ENCODE measurements at regions of chr6 and their contacts with region 1.

Region 1: DNA sequence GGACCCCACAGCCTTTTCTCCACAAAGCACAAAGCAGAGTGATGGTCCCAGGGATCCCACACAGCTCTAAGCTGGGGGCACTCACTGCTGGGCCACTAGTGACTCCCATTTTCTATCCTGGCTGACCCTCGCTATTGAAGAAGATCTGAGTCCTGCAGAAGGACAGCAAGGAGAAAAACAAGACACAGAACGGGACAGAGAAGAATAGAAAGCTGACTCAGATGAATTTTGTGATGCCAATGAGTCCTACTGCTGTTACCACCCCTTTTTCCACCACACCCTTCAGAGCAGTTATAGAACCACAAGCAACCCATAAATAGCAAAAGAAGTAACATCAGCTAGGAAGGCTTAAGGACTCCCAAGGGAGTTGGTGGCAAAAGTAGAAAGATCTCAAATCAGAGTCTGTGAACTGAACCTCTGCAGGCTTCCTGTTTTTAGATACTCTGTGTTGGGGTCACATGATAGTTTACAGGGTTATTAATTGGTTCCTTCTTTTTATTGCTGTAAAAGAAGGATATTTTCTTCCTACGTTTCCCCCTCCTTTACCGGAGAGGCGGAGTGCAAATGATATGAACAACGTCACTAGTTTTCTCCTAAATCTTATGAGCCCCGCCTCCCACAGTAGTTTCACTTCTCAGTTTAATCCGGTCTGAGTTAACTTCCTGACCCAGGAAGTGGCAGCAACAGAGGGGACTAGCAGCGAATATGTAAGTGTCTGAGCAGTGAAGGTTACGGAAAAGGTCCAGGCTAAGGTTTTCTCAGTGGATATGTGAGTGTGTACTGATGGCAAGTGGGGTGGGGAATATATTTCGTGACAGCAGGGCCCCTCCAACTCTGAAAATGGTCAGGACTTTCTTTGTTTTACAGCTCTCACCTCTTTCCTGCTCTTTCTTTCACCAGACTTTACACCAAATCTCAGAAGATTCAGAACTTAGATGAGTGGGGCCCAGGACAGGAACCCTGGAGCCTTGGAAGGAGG is at the start of gene TRIM38:
- DNase-seq: peak; percentile 88
- ATAC-seq: peak; percentile 87
- H3K4me3 Mint-ChIP-seq: peak within 1 kb of the TSS; percentile 83
- H3K27ac Mint-ChIP-seq: peak within 1 kb of the TSS; percentile 94
- H3K4me1 Mint-ChIP-seq: peaks cover 73% of the 10 kb centered on the region
- H3K27me3 Mint-ChIP-seq: no peaks in the 10 kb centered on the region
- CTCF ChIP-seq: no peak
- total RNA-seq, gene TRIM38: 8.0 to 8.3 TPM

Region 2: GRCh38 chr6:25173951-25174474 is 788.4 kb before region 1 on chr6:
- CTCF ChIA-PET with region 1: no interaction called
- POLR2A ChIA-PET with region 1: no interaction called
- intact Hi-C with region 1: no loop called
- DNase-seq: no peak
- ATAC-seq: peak; percentile 71
- H3K4me3 Mint-ChIP-seq: no peak overlapping the region
- H3K27ac Mint-ChIP-seq: no peak overlapping the region
- H3K4me1 Mint-ChIP-seq: peaks cover 57% of the 10 kb centered on the region
- H3K27me3 Mint-ChIP-seq: peaks cover 5% of the 10 kb centered on the region
- CTCF ChIP-seq: no peak

Region 3: GRCh38 chr6:25942561-25943147 is 19.8 kb before region 1 on chr6:
- CTCF ChIA-PET with region 1: no interaction called
- POLR2A ChIA-PET with region 1: interaction called, 3 read pairs
- intact Hi-C with region 1: loop called (anchors 1 kb)
- DNase-seq: no peak
- ATAC-seq: no peak
- H3K4me3 Mint-ChIP-seq: no peak overlapping the region
- H3K27ac Mint-ChIP-seq: no peak overlapping the region
- H3K4me1 Mint-ChIP-seq: peaks cover 16% of the 10 kb centered on the region
- H3K27me3 Mint-ChIP-seq: peaks cover 6% of the 10 kb centered on the region
- CTCF ChIP-seq: peak; percentile 67

Region 4: DNA sequence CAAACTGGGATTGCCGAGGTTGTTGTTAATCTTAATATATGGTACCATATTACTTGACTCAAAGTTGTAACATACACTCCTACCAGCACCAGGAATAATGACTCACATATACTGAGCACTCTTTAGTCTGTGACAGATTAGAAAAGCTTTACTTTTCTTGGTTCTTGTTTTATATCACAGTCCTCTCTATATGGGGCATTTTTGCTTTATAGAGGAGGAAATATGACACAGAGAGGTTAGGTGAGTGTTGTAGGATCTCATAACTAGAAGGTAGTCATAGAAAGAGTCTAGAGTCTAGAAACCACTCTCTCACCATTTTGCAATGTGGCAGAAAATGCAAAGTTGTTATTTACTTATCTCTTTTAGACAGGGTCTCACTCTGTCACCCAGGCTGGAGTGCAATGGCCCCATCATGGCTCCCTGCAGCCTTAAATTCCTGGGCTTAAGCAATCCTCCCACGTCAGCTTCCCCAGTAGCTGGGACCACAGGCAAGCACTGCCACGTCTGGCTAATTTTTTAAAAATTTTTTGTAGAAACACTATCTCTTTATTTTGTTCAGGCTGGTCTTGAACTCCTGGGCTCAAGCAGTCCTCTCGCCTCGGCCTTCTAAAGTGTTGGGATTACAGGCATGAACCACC is 13.6 kb after region 1 on chr6:
- CTCF ChIA-PET with region 1: interaction called, 7 read pairs
- POLR2A ChIA-PET with region 1: interaction called, 10 read pairs
- intact Hi-C with region 1: no loop called
- DNase-seq: no peak
- ATAC-seq: peak; percentile 91
- H3K4me3 Mint-ChIP-seq: no peak overlapping the region
- H3K27ac Mint-ChIP-seq: peak overlapping the region; percentile 3
- H3K4me1 Mint-ChIP-seq: peaks cover 35% of the 10 kb centered on the region
- H3K27me3 Mint-ChIP-seq: no peaks in the 10 kb centered on the region
- CTCF ChIP-seq: no peak

Region 5: DNA sequence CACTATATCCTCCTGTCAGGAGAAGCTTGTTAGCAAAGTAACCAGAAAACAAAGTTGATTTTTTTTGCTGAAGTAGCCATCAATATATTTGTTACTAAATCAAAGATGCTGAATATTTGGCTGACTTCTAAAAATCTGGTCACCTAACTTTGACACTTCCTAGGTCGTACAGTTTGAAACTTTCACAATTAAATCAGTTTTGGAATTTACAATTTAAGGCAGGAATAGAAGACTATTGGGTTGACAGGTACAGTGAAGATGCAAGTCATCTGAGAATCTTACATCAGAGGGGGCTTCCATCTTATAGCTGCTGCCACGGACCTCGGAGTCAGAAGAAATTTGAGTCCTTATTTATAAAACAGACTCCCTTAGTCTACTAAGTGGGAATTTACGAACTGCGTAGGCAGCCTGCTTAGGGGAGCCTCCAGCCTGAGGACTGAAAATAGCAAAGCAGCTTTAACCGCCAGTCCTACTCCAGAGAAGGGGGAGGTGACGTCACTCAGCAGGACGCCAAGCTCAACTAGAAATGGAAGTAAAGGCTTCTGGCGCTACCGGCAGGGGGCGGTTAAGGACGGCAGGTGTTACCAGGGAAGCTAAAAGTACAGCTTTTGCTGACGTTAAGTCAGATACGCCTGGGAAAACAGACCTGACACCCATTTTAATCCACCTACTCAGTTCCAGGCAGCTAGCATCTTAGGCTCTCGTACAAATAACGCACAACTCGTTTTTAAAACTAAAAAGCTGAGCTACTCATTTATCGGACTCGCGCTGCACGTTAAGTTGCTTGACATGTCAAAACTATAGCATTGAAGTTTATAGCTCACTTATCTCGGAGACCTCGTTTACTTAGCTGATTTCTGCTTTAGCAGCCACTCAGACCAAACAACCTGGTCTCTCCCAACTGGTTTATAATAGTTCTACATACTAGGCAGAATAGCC is 63.7 kb after region 1 on chr6:
- CTCF ChIA-PET with region 1: no interaction called
- POLR2A ChIA-PET with region 1: interaction called, 12 read pairs
- intact Hi-C with region 1: no loop called
- DNase-seq: peak; percentile 97
- ATAC-seq: peak; percentile 41
- H3K4me3 Mint-ChIP-seq: peak overlapping the region; percentile 77
- H3K27ac Mint-ChIP-seq: peak overlapping the region; percentile 95
- H3K4me1 Mint-ChIP-seq: peaks cover 51% of the 10 kb centered on the region
- H3K27me3 Mint-ChIP-seq: peaks cover 2% of the 10 kb centered on the region
- CTCF ChIP-seq: peak; percentile 75